Adrenal gland (tissue), 19 donors: ENCODE measurements at regions of chr21 and their contacts with region 1.

Region 1: GRCh38 chr21:32382108-32382644 is 10.6 kb downstream of the URB1 start:
- DNase-seq: peak in 1 of 7 donors; percentile 39
- H3K4me3 ChIP-seq: no peak overlapping the region
- H3K27ac ChIP-seq: peak overlapping the region in 1 of 5 donors; percentile 72
- H3K4me1 ChIP-seq: peaks cover 6 to 11% of the 10 kb centered on the region in 2 donors
- H3K27me3 ChIP-seq: no peaks in the 10 kb centered on the region
- CTCF ChIP-seq: no peak
- POLR2A ChIP-seq: no peak

Region 2: DNA sequence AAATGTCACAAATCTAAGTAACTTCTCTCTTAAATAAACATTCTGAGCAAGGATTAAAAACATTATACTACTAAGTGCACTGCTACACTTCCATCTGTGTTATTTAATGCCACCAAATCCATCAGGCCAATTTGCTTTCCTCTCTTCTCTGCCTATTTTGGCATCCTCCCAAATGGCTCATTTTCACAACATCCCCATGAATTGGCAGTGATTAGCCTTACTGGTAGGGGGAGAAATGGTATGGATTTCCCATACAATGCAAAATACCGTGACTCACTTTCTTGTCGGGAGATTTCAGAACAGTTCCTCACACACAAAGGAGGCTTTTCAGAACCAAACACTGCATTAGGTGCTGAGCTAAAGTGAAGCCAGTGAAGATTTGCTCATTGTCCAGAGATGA is 299.0 kb before region 1 on chr21:
- intact Hi-C with region 1: no loop called
- DNase-seq: no peak
- H3K4me3 ChIP-seq: no peak overlapping the region
- H3K27ac ChIP-seq: no peak overlapping the region
- H3K4me1 ChIP-seq: no peaks in the 10 kb centered on the region
- H3K27me3 ChIP-seq: no peaks in the 10 kb centered on the region
- CTCF ChIP-seq: no peak
- POLR2A ChIP-seq: no peak

Region 3: DNA sequence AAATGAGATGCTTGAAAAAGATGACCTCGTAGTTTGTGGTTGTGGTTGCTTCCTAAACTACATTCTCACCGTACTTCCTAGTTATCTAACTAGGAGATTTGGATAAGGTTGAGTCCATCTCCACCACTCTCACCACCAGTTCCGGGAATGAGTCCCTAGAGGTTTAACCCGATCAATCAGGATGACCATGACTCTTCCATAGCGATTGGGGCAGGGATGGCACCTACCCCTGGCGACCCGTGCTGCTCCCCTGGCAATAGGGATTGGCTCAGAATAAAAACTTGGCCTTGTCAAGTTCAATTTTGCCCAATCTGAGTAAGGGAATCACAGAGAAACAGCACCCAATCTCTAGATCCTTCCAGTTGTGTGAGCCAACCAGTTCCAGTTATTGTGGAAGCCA is 100.6 kb before region 1 on chr21:
- intact Hi-C with region 1: loop called in 1 of 2 experiments (anchors 10 kb)
- DNase-seq: no peak
- H3K4me3 ChIP-seq: no peak overlapping the region
- H3K27ac ChIP-seq: no peak overlapping the region
- H3K4me1 ChIP-seq: peaks cover 10 to 18% of the 10 kb centered on the region in 2 donors
- H3K27me3 ChIP-seq: no peaks in the 10 kb centered on the region
- CTCF ChIP-seq: no peak
- POLR2A ChIP-seq: no peak

Region 4: DNA sequence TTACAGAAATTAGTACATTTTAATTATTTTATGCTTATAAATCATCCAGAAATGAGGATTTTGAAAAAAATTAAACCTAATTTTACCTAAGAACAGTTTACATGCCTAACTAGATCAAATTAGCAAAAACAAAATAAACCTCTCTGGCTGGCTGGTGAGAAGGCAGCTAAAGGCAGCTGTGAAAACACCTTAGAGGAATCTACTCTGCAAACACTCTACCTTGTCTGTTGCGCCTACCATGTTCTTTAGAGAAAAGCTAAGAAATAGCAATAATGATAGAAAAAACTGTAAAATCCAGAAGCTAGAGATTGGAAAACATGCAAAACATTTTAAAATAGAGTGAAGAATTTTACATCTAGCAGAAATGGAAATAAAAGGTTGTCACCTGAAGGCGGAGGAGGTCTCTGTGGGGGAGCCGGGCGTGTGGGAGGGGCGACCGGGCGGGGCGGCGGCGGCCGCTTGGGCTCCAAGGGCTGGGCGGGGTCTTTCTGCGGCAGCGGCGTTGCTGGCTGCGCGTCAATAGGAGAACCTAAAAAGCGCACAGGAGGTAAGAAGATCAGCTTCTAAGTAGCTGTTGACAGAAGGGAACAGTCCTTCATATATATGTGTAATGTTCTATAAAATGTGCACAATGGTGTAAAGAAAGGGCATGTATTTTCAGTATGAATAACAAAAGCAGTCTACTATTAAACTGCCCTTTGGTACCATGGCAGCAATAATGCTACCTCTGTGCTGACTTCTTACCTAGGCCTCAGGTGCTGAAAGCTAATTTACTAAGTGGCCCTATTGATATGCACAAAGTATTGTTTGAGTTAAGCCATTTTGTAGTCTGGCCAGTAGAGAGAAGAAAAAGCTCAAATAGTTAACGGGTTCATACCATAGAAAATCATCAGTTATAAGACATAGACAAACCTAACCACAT is 263.3 kb after region 1 on chr21:
- intact Hi-C with region 1: no loop called
- DNase-seq: no peak
- H3K4me3 ChIP-seq: no peak overlapping the region
- H3K27ac ChIP-seq: no peak overlapping the region
- H3K4me1 ChIP-seq: no peaks in the 10 kb centered on the region
- H3K27me3 ChIP-seq: no peaks in the 10 kb centered on the region
- CTCF ChIP-seq: no peak
- POLR2A ChIP-seq: no peak